ENCODE measurements at regions of chr17 and their contacts with region 1.

Region 1: GRCh38 chr17:42609182-42609813 is at the starts of genes RETREG3 and TUBG1:
- DNase-seq: peak; percentile 99
- total RNA-seq, gene RETREG3: 26.1 and 30.4 TPM in 2 replicates
- total RNA-seq, gene TUBG1: 51.4 and 102 TPM in 2 replicates

Region 2: GRCh38 chr17:42554250-42555121 is 54.8 kb before region 1 on chr17:
- in situ Hi-C with region 1: no loop called
- DNase-seq: peak; percentile 88

Region 3: DNA sequence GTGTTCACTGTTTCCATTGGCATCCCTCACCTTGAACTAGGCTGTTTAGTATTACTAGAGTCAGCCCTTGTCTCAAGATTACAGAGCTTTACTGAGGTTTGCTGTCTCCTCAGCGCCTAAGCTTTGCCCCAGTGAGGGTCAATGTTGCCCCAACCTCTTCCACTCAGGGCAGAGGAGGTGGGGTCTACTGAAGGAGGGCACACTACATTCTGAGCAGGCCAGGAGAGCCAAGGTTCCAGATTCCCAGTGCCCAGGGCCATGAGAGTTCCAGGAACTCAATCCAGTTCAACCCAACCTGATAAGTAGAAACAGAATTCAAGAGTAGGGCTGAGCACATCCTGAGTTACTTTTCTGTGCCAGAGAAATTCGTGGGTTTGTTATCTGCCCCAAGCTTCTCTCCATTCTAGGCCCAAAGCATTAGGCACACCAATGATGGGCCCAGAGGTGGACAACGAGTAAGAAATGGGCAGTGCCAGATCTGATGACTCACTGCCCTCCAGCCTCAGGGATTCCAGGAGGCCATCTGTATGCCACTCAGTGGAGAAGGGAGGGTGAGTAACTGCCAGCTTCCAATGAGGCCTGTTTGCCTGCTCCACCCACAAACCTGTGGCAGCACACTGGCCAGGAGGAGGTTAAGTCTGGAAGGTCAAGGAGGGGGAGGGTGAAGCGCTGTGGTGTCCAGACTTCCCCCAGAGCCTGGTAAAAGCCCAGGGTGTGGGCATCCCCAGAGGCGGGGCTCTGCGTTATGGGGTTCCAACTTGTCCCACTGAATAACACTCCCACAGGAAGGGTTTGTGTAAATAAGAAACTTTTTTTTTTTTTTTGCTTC is 58.0 kb after region 1 on chr17:
- in situ Hi-C with region 1: loop called (anchors 5 kb)
- DNase-seq: peak; percentile 32